ENCODE measurements at regions of chr3 and their contacts with region 1.

Region 1: GRCh38 chr3:112642912-112643506 is 2.1 kb upstream of the CCDC80 start:
- DNase-seq: peak; percentile 46
- ATAC-seq: peak; percentile 99
- H3K4me3 ChIP-seq: no peak overlapping the region
- H3K27ac ChIP-seq: no peak overlapping the region
- H3K4me1 ChIP-seq: peaks cover 15% of the 10 kb centered on the region
- H3K27me3 ChIP-seq: peaks cover 0 to 8% of the 10 kb centered on the region in 2 experiments; a peak in 3 of 4 replicates
- CTCF ChIP-seq: peak; percentile 86 to 96 (median 93)
- EP300 ChIP-seq: no peak
- POLR2A ChIP-seq: no peak
- RAD21 ChIP-seq: peak; percentile 85

Region 2: DNA sequence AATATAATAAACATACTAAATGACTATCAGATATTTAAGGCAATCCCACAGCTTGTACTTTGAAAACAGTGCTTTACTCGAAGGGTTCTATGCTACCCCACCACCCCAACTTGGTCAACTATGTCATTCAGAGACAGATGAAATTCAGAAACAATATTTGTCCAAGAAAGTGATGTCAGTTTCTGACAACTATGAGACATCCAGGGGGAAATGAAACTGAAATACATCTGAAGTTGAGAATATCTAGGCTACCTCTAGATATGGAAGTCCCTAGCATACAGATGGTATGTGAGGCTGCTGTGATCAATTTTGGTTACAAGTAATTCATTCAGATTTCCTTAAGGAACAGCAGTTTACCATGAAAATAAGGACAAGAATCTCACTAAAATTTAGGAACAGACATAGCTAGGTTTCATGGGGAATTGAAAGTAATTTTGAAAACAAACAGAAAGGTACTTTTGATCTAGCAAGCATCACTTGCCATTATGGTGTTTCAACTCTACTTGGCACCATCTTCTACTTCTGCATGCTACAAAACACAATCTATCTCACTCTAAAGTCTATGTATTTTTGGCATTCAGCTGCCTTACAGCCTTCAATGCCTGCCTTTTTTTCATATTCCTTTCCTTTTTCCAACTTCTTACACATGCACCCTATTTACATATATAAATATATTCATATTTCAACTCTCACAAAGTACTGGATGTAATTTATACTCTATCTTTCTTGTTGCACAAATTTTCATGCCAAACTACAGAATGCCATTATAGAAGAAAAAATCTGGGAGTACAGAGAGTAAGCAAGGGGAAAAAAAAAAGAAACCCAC is 103.0 kb before region 1 on chr3:
- CTCF ChIA-PET with region 1: no interaction called
- POLR2A ChIA-PET with region 1: no interaction called
- RAD21 ChIA-PET with region 1: no interaction called
- SMC1A ChIA-PET with region 1: no interaction called
- in situ Hi-C with region 1: no loop called
- intact Hi-C with region 1: no loop called
- DNase-seq: peak; percentile 38
- ATAC-seq: peak; percentile 97
- H3K4me3 ChIP-seq: no peak overlapping the region
- H3K27ac ChIP-seq: peak overlapping the region; percentile 57
- H3K4me1 ChIP-seq: peaks cover 13% of the 10 kb centered on the region
- H3K27me3 ChIP-seq: no peaks in the 10 kb centered on the region
- CTCF ChIP-seq: no peak
- EP300 ChIP-seq: no peak
- POLR2A ChIP-seq: no peak
- RAD21 ChIP-seq: no peak

Region 3: GRCh38 chr3:112629425-112629824 is 13.6 kb before region 1 on chr3:
- CTCF ChIA-PET with region 1: interaction called, 23 read pairs
- POLR2A ChIA-PET with region 1: interaction called, 5 read pairs
- RAD21 ChIA-PET with region 1: interaction called, 3 read pairs
- SMC1A ChIA-PET with region 1: interaction called, 9 read pairs
- in situ Hi-C with region 1: no loop called
- intact Hi-C with region 1: no loop called
- DNase-seq: no peak
- ATAC-seq: peak; percentile 63
- H3K4me3 ChIP-seq: no peak overlapping the region
- H3K27ac ChIP-seq: no peak overlapping the region
- H3K4me1 ChIP-seq: no peaks in the 10 kb centered on the region
- H3K27me3 ChIP-seq: 0 out of 4 replicates have a peak, but pooled peaks cover 0 to 4% of the 10 kb centered on the region in 2 experiments
- CTCF ChIP-seq: no peak
- EP300 ChIP-seq: no peak
- POLR2A ChIP-seq: no peak
- RAD21 ChIP-seq: no peak

Region 4: GRCh38 chr3:112676659-112677234 is 33.7 kb after region 1 on chr3:
- CTCF ChIA-PET with region 1: interaction called, 6 read pairs
- POLR2A ChIA-PET with region 1: no interaction called
- RAD21 ChIA-PET with region 1: interaction called, 7 read pairs
- SMC1A ChIA-PET with region 1: interaction called, 8 read pairs
- in situ Hi-C with region 1: no loop called
- intact Hi-C with region 1: loop called (anchors 2 kb)
- DNase-seq: peak; percentile 96
- ATAC-seq: peak; percentile 99
- H3K4me3 ChIP-seq: no peak overlapping the region
- H3K27ac ChIP-seq: no peak overlapping the region
- H3K4me1 ChIP-seq: peaks cover 21% of the 10 kb centered on the region
- H3K27me3 ChIP-seq: peaks cover 3 to 4% of the 10 kb centered on the region in 2 experiments; a peak in 3 of 4 replicates
- CTCF ChIP-seq: no peak
- EP300 ChIP-seq: peak; percentile 98 to 100
- POLR2A ChIP-seq: no peak
- RAD21 ChIP-seq: no peak

Region 5: GRCh38 chr3:112973325-112974177 is 330.5 kb after region 1 on chr3:
- CTCF ChIA-PET with region 1: interaction called, 92 read pairs
- POLR2A ChIA-PET with region 1: no interaction called
- RAD21 ChIA-PET with region 1: interaction called, 48 read pairs
- SMC1A ChIA-PET with region 1: interaction called, 61 read pairs
- in situ Hi-C with region 1: loop called (anchors 5 kb)
- intact Hi-C with region 1: no loop called
- DNase-seq: peak; percentile 66
- ATAC-seq: peak; percentile 90
- H3K4me3 ChIP-seq: peak overlapping the region; percentile 45
- H3K27ac ChIP-seq: peak overlapping the region; percentile 77
- H3K4me1 ChIP-seq: peaks cover 34% of the 10 kb centered on the region
- H3K27me3 ChIP-seq: no peaks in the 10 kb centered on the region
- CTCF ChIP-seq: no peak
- EP300 ChIP-seq: peak; percentile 57 to 67; a peak in 2 of 4 replicates
- POLR2A ChIP-seq: no peak
- RAD21 ChIP-seq: no peak

Region 6: DNA sequence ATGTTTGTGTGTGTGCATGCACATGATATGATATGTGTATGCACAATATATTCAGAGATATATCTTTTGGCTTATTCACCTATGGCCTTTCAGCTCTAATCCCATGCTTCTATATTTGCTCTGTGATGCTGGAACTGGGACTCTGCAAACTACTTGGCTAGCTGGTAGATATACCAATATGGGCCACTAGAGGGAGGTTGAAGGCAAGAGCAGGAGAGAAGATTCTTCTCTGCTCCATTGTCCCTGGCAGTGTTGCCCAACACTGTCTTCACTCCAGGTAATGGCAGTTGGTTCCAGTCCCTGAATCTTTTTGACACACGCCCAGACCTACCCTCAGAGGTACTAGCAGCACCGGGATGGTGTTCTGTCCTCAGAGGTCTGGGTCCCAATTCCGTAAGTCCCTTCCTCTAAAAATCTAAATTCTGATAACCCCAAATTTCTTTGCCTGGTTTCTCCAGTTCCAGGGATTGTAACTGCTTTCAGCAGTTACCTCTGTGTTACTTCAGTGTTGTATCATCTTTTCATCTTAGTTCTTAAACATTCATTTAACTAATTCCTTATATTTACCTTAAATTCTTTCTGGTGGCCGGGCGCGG is 392.5 kb after region 1 on chr3:
- CTCF ChIA-PET with region 1: interaction called, 12 read pairs
- POLR2A ChIA-PET with region 1: no interaction called
- RAD21 ChIA-PET with region 1: interaction called, 10 read pairs
- SMC1A ChIA-PET with region 1: interaction called, 16 read pairs
- in situ Hi-C with region 1: no loop called
- intact Hi-C with region 1: loop called (anchors 2 kb)
- DNase-seq: no peak
- ATAC-seq: peak; percentile 95
- H3K4me3 ChIP-seq: no peak overlapping the region
- H3K27ac ChIP-seq: no peak overlapping the region
- H3K4me1 ChIP-seq: no peaks in the 10 kb centered on the region
- H3K27me3 ChIP-seq: no peaks in the 10 kb centered on the region
- CTCF ChIP-seq: peak; percentile 72 to 92 (median 85)
- EP300 ChIP-seq: no peak
- POLR2A ChIP-seq: no peak
- RAD21 ChIP-seq: peak; percentile 61

Region 7: DNA sequence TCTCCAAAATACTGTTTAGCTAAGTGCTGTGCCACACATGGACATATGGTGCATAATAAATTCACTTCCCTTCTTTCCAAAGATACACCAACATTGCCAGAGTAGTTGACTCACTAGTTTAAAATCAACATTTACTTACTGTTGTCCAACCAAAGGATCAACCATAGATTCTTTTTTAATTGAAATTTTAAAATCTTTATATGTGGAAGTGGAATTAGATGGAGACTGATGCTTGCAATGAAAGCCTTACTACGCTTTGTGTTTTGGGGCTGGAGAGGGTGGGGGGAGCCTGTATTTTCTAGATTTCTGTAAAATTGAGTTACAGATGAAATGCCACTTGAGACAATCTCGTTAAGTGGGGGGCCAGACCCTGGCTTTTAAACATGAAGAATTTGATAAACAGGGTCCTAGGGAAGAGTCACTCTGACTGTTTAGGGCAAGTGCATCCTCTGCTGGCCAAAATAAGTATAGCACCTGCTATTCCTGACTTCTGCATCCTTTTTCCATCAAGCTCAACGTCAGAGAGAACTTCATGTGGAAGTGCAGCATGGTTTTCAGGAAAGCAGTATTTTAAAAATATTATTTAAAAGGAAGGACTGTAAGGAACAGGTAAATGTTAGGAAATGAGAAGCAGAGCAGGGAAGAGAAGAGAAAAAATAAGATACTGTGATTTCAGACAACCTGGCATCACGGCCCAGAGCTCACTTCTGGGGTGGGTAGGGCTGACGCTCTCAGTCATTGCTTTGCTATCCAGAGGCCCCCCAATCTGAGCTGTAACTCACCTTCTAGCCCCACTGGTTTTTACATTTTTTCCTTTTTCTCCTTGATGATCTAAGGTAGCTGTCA is 645.0 kb after region 1 on chr3:
- CTCF ChIA-PET with region 1: interaction called, 24 read pairs
- POLR2A ChIA-PET with region 1: no interaction called
- RAD21 ChIA-PET with region 1: interaction called, 19 read pairs
- SMC1A ChIA-PET with region 1: interaction called, 11 read pairs
- in situ Hi-C with region 1: loop called (anchors 10 kb)
- intact Hi-C with region 1: loop called (anchors 1 kb)
- DNase-seq: no peak
- ATAC-seq: peak; percentile 65
- H3K4me3 ChIP-seq: no peak overlapping the region
- H3K27ac ChIP-seq: no peak overlapping the region
- H3K4me1 ChIP-seq: no peaks in the 10 kb centered on the region
- H3K27me3 ChIP-seq: no peaks in the 10 kb centered on the region
- CTCF ChIP-seq: peak; percentile 97 to 100 (median 99)
- EP300 ChIP-seq: no peak
- POLR2A ChIP-seq: no peak
- RAD21 ChIP-seq: peak; percentile 97

Measured in GM12878 (cell line).